ENCODE measurements at regions of chr2 and their contacts with region 1.

Region 1: GRCh38 chr2:174688079-174688478 is 76.2 kb downstream of the CHRNA1 start:
- DNase-seq: peak in 4 of 5 donors; percentile 44 to 55 (median 48)
- H3K4me3 ChIP-seq: no peak overlapping the region
- H3K4me3 Mint-ChIP-seq: peak overlapping the region in 1 of 8 donors; percentile 17
- H3K27ac ChIP-seq: no peak overlapping the region
- H3K27ac Mint-ChIP-seq: peak overlapping the region; percentile 1 to 81 (median 56)
- H3K4me1 ChIP-seq: peaks cover 14% of the 10 kb centered on the region
- H3K4me1 Mint-ChIP-seq: peaks cover 13 to 25% (median 19%) of the 10 kb centered on the region in 4 donors
- H3K27me3 ChIP-seq: no peaks in the 10 kb centered on the region
- H3K27me3 Mint-ChIP-seq: peaks cover 0 to 2% of the 10 kb centered on the region in 2 donors

Region 2: GRCh38 chr2:174492963-174493431 is 195.1 kb before region 1 on chr2:
- CTCF ChIA-PET with region 1: interaction called, 13 read pairs
- POLR2A ChIA-PET with region 1: interaction called, 5 read pairs
- intact Hi-C with region 1: no loop called
- DNase-seq: peak; percentile 76 to 86 (median 83)
- H3K4me3 ChIP-seq: peak overlapping the region; percentile 33 to 35
- H3K4me3 Mint-ChIP-seq: peak overlapping the region; percentile 84 to 95 (median 90)
- H3K27ac ChIP-seq: peak overlapping the region; percentile 78
- H3K27ac Mint-ChIP-seq: peak overlapping the region; percentile 91 to 98 (median 96)
- H3K4me1 ChIP-seq: peaks cover 80% of the 10 kb centered on the region
- H3K4me1 Mint-ChIP-seq: peaks cover 49 to 87% (median 66%) of the 10 kb centered on the region in 4 donors
- H3K27me3 ChIP-seq: no peaks in the 10 kb centered on the region
- H3K27me3 Mint-ChIP-seq: no peaks in the 10 kb centered on the region

Region 3: DNA sequence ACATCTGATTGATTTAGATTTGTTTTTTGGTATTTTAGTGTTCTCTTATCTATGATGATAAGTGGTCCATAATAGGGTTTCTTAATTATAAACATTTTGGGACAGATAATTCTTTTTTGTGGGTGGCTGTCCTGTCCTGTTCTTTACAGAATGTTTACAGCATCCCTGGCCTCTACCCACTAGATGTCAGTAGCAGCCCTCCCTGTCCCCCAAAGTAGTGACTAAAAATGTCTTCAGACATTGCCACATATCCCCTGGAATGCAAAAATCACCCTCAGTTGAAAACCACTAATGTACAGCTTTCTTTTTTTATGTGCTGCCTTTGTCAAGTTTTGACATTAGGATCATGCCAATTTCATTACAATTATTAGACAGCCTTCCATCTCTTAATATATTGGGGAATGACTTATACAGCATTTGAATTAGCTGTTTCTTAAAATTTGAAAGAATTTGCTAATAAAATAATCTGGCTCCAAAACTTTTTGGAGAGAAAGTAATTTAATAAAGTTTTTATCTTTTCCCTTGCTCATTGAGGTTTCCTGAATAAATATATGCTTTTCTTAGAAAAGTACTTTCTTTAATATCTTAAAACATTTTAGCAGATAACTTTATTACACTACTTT is 110.0 kb before region 1 on chr2:
- CTCF ChIA-PET with region 1: interaction called, 71 read pairs
- POLR2A ChIA-PET with region 1: interaction called, 3 read pairs
- intact Hi-C with region 1: loop called (anchors 1 kb)
- DNase-seq: peak; percentile 63 to 77 (median 67)
- H3K4me3 ChIP-seq: no peak overlapping the region
- H3K4me3 Mint-ChIP-seq: peak overlapping the region in 1 of 8 donors; percentile 3
- H3K27ac ChIP-seq: no peak overlapping the region
- H3K27ac Mint-ChIP-seq: peak overlapping the region; percentile 66 to 88 (median 80)
- H3K4me1 ChIP-seq: peaks cover 93% of the 10 kb centered on the region
- H3K4me1 Mint-ChIP-seq: peaks cover 49 to 93% (median 68%) of the 10 kb centered on the region in 4 donors
- H3K27me3 ChIP-seq: no peaks in the 10 kb centered on the region
- H3K27me3 Mint-ChIP-seq: no peaks in the 10 kb centered on the region

Region 4: GRCh38 chr2:174615871-174616436 is 72.1 kb before region 1 on chr2:
- CTCF ChIA-PET with region 1: interaction called, 222 read pairs
- POLR2A ChIA-PET with region 1: interaction called, 4 read pairs
- intact Hi-C with region 1: no loop called
- DNase-seq: no peak
- H3K4me3 ChIP-seq: no peak overlapping the region
- H3K4me3 Mint-ChIP-seq: peak overlapping the region in 7 of 8 donors; percentile 23 to 74 (median 52)
- H3K27ac ChIP-seq: peak overlapping the region; percentile 38
- H3K27ac Mint-ChIP-seq: peak overlapping the region; percentile 49 to 89 (median 78)
- H3K4me1 ChIP-seq: peaks cover 88% of the 10 kb centered on the region
- H3K4me1 Mint-ChIP-seq: peaks cover 61 to 94% (median 81%) of the 10 kb centered on the region in 4 donors
- H3K27me3 ChIP-seq: no peaks in the 10 kb centered on the region
- H3K27me3 Mint-ChIP-seq: no peaks in the 10 kb centered on the region

Region 5: DNA sequence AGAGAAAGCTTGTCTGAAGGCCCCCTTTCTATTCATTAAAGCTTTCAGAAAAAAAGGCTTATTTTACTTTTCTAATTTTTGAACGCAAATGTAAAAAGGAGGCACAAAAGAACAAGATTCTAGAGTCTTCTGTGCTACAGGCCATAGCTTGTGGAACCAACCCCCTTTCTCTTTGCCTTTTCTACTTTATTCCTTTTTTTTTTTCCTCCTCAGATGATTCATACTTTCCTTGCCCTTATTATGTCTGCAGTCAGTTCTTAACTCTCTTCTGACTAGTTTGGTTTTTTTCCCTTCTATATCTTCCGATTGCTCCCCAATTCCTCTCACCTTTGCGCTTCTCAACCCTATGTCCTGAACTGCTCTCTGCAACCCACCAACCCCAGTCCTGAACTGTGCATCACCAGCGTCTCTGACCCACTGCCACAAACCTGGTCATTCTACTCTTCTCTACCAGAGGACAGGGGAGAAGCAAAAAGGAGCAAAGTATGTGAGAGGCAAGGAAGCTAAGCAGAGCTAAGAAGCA is 33.6 kb before region 1 on chr2:
- CTCF ChIA-PET with region 1: interaction called, 11 read pairs
- POLR2A ChIA-PET with region 1: no interaction called
- intact Hi-C with region 1: no loop called
- DNase-seq: no peak
- H3K4me3 ChIP-seq: no peak overlapping the region
- H3K4me3 Mint-ChIP-seq: no peak overlapping the region
- H3K27ac ChIP-seq: no peak overlapping the region
- H3K27ac Mint-ChIP-seq: peak overlapping the region in 3 of 7 donors; percentile 3 to 36 (median 19)
- H3K4me1 ChIP-seq: peaks cover 16% of the 10 kb centered on the region
- H3K4me1 Mint-ChIP-seq: peaks cover 5 to 28% (median 14%) of the 10 kb centered on the region in 4 donors
- H3K27me3 ChIP-seq: no peaks in the 10 kb centered on the region
- H3K27me3 Mint-ChIP-seq: no peaks in the 10 kb centered on the region

Measured in CD4-positive, alpha-beta memory T cell (primary cell).